ENCODE measurements at regions of chr3 and their contacts with region 1.

Region 1: DNA sequence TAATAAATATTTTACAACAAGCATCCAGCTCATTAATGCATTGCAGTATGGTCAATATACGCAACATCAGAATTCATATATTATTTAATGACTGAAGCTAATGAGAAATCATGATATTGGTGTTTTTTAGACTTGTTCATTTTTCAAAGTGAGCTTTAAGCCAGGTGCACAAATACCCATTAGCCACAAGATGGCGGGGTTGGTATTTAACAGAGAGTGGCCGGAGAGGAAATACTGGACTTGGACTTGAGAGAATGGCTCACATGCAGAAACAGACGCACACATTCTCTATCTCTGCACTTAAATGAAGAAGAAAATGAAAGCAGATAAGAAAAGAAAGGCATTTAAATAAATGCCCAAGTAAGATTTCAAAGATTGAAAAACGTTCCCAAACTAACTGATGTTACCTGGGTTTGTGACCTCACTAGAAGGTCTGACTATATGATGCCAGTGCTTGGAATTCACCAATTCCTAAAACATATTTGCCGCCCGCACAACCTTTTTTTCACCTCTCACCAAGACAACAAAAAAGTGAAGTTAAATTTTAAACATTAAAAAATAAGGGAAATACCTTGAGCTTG is 21.2 kb upstream of the CRBN start:
- DNase-seq: peak; percentile 57
- H3K4me3 Mint-ChIP-seq: no peak overlapping the region
- H3K27ac Mint-ChIP-seq: no peak overlapping the region
- H3K4me1 Mint-ChIP-seq: peaks cover 19% of the 10 kb centered on the region
- H3K27me3 Mint-ChIP-seq: no peaks in the 10 kb centered on the region

Region 2: DNA sequence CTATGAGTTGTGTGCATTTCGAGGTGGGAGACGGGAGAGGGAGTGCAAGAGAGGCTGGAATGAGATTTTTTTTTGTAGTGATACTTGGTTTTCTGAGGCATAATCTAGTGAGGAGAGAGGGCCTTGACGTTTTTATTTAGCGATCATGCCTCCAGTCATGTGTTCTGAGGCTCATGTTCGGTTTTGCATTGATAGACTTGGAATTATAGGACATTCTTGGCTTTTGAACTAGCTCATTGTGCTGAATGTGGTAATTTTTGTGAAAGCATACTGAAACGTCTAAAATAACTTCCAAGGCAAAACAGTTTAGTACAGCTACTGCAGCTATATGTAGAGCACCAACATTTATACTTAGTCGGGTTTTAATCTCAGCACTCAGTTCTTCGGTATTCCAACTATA is 693.9 kb before region 1 on chr3:
- CTCF ChIA-PET with region 1: no interaction called
- intact Hi-C with region 1: no loop called
- DNase-seq: no peak
- H3K4me3 Mint-ChIP-seq: no peak overlapping the region
- H3K27ac Mint-ChIP-seq: no peak overlapping the region
- H3K4me1 Mint-ChIP-seq: no peaks in the 10 kb centered on the region
- H3K27me3 Mint-ChIP-seq: peaks cover 23% of the 10 kb centered on the region

Region 3: GRCh38 chr3:3353153-3353552 is 152.4 kb after region 1 on chr3:
- CTCF ChIA-PET with region 1: no interaction called
- intact Hi-C with region 1: no loop called
- DNase-seq: no peak
- H3K4me3 Mint-ChIP-seq: no peak overlapping the region
- H3K27ac Mint-ChIP-seq: no peak overlapping the region
- H3K4me1 Mint-ChIP-seq: no peaks in the 10 kb centered on the region
- H3K27me3 Mint-ChIP-seq: no peaks in the 10 kb centered on the region

Region 4: DNA sequence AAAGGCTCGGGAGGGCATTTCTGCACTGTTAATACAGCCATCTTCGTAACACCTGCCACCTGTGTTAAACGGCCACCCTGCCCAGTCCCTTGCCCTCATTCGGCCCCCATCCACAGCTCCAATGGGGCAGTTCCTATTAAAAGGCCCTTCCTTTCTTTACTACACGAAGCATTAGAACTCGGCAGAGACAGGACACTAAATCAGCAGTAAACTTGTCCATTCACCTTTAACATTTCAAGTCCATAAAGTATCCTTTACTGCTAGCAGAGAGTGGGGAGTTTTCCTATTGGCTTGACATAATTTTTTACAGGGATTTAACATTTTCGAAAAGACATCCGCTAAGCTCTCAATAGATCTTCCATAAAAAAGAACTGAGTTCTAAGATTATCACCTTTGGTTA is 674.8 kb after region 1 on chr3:
- CTCF ChIA-PET with region 1: no interaction called
- intact Hi-C with region 1: no loop called
- DNase-seq: no peak
- H3K4me3 Mint-ChIP-seq: no peak overlapping the region
- H3K27ac Mint-ChIP-seq: no peak overlapping the region
- H3K4me1 Mint-ChIP-seq: no peaks in the 10 kb centered on the region
- H3K27me3 Mint-ChIP-seq: no peaks in the 10 kb centered on the region

Region 5: DNA sequence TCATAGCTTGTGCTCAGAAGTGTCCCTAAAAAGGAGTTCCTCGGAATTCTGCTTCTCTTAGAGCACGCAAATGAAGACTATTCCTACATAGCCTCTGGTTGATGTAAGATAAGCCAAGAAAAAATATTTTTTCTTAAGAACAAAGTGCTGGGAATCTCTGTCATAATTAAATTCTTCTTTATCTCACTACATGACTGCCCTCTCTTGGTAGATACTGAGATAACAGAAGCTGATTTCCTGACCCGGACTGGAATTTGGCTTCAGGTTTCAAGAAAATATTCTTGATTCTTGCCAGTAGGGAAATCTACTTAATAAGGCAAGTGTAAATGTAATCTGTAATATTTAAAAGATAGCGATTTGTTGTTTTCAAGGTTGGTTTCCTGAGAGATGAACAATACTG is 1071.1 kb after region 1 on chr3:
- CTCF ChIA-PET with region 1: interaction called, 6 read pairs
- intact Hi-C with region 1: loop called (anchors 2 kb)
- DNase-seq: no peak
- H3K4me3 Mint-ChIP-seq: no peak overlapping the region
- H3K27ac Mint-ChIP-seq: no peak overlapping the region
- H3K4me1 Mint-ChIP-seq: peaks cover 8% of the 10 kb centered on the region
- H3K27me3 Mint-ChIP-seq: no peaks in the 10 kb centered on the region

Region 6: GRCh38 chr3:4290272-4290893 is 1089.7 kb after region 1 on chr3:
- CTCF ChIA-PET with region 1: interaction called, 11 read pairs
- intact Hi-C with region 1: loop called (anchors 1 kb)
- DNase-seq: peak; percentile 56
- H3K4me3 Mint-ChIP-seq: no peak overlapping the region
- H3K27ac Mint-ChIP-seq: no peak overlapping the region
- H3K4me1 Mint-ChIP-seq: peaks cover 12% of the 10 kb centered on the region
- H3K27me3 Mint-ChIP-seq: no peaks in the 10 kb centered on the region